ENCODE measurements at regions of chr1 and their contacts with region 1.

Region 1: DNA sequence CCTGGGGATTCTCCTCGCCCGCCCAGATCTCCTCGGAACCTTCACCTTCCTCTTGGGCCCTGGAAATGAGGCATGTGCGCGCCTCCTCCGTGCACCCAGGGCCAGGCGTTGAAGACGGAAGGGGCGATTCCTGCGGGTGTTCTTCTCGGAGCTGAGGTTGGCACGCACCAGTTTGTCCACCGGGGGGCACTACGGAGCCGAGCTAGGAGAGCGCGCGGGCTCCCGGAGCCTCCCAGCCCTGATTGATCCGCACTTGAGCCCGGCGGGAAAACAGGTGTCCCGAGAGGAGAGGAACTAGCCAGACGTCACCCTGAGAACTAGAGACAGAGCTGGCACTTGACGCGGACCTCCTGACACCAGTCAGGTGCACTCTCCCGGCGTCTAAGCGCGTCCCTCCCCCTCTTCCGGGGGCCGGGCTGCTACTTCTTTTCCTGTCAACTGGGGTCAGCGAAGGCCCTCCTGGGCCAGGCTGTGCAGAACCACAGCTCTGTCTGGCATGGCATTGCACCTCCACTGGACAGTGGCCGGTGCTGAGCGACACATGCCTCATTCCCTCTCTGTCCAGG is 18.3 kb upstream of the SERINC2 start:
- DNase-seq: peak; percentile 90
- H3K4me3 Mint-ChIP-seq: peak overlapping the region; percentile 40
- H3K27ac Mint-ChIP-seq: no peak overlapping the region
- H3K4me1 Mint-ChIP-seq: peaks cover 19% of the 10 kb centered on the region
- H3K27me3 Mint-ChIP-seq: no peaks in the 10 kb centered on the region
- CTCF ChIP-seq: peak; percentile 83

Region 2: GRCh38 chr1:31405578-31406245 is 11.0 kb after region 1 on chr1:
- CTCF ChIA-PET with region 1: interaction called, 48 read pairs
- POLR2A ChIA-PET with region 1: interaction called, 3 read pairs
- intact Hi-C with region 1: no loop called
- DNase-seq: no peak
- H3K4me3 Mint-ChIP-seq: no peak overlapping the region
- H3K27ac Mint-ChIP-seq: no peak overlapping the region
- H3K4me1 Mint-ChIP-seq: peaks cover 1% of the 10 kb centered on the region
- H3K27me3 Mint-ChIP-seq: no peaks in the 10 kb centered on the region
- CTCF ChIP-seq: no peak

Region 3: GRCh38 chr1:31413405-31414125 is 18.9 kb after region 1 on chr1:
- CTCF ChIA-PET with region 1: interaction called, 238 read pairs
- POLR2A ChIA-PET with region 1: interaction called, 10 read pairs
- intact Hi-C with region 1: no loop called
- DNase-seq: peak; percentile 77
- H3K4me3 Mint-ChIP-seq: peak overlapping the region; percentile 97
- H3K27ac Mint-ChIP-seq: peak overlapping the region; percentile 67
- H3K4me1 Mint-ChIP-seq: peaks cover 39% of the 10 kb centered on the region
- H3K27me3 Mint-ChIP-seq: no peaks in the 10 kb centered on the region
- CTCF ChIP-seq: no peak

Region 4: GRCh38 chr1:31422505-31423319 is 28.0 kb after region 1 on chr1:
- CTCF ChIA-PET with region 1: interaction called, 238 read pairs
- POLR2A ChIA-PET with region 1: interaction called, 8 read pairs
- intact Hi-C with region 1: loop called (anchors 1 kb)
- DNase-seq: peak; percentile 91
- H3K4me3 Mint-ChIP-seq: peak overlapping the region; percentile 30
- H3K27ac Mint-ChIP-seq: peak overlapping the region; percentile 94
- H3K4me1 Mint-ChIP-seq: peaks cover 29% of the 10 kb centered on the region
- H3K27me3 Mint-ChIP-seq: no peaks in the 10 kb centered on the region
- CTCF ChIP-seq: peak; percentile 95

Region 5: GRCh38 chr1:31541194-31541593 is 146.5 kb after region 1 on chr1:
- CTCF ChIA-PET with region 1: interaction called, 10 read pairs
- POLR2A ChIA-PET with region 1: no interaction called
- intact Hi-C with region 1: no loop called
- DNase-seq: no peak
- H3K4me3 Mint-ChIP-seq: no peak overlapping the region
- H3K27ac Mint-ChIP-seq: no peak overlapping the region
- H3K4me1 Mint-ChIP-seq: no peaks in the 10 kb centered on the region
- H3K27me3 Mint-ChIP-seq: no peaks in the 10 kb centered on the region
- CTCF ChIP-seq: no peak